ENCODE measurements at regions of chr11 and their contacts with region 1.

Region 1: GRCh38 chr11:13105237-13105844 is 96.2 kb downstream of the RASSF10 start:
- DNase-seq: peak in 4 of 5 donors; percentile 35 to 47 (median 40)
- ATAC-seq: peak in 3 of 4 donors; percentile 36 to 70 (median 69)
- H3K4me3 ChIP-seq: no peak overlapping the region
- H3K27ac ChIP-seq: peak overlapping the region in 4 of 12 donors; percentile 22 to 54 (median 42)
- H3K4me1 ChIP-seq: peaks cover 0 to 20% (median 6%) of the 10 kb centered on the region in 12 donors
- H3K27me3 ChIP-seq: peaks cover 0 to 4% (median 0%) of the 10 kb centered on the region in 9 donors
- CTCF ChIP-seq: no peak
- POLR2A ChIP-seq: no peak

Region 2: GRCh38 chr11:13008625-13009475 is 96.5 kb before region 1 on chr11 and contains the start of gene RASSF10:
- intact Hi-C with region 1: loop called in 1 of 10 experiments (anchors 10 kb)
- DNase-seq: peak; percentile 63 to 79 (median 70)
- ATAC-seq: peak; percentile 80 to 95 (median 90)
- H3K4me3 ChIP-seq: peak within 1 kb of the TSS; percentile 26 to 67 (median 54)
- H3K27ac ChIP-seq: peak within 1 kb of the TSS in 4 of 12 donors; percentile 20 to 60 (median 46)
- H3K4me1 ChIP-seq: peaks cover 0 to 42% (median 18%) of the 10 kb centered on the region in 12 donors
- H3K27me3 ChIP-seq: peaks cover 17 to 94% (median 60%) of the 10 kb centered on the region in 9 donors
- CTCF ChIP-seq: no peak
- POLR2A ChIP-seq: peak in 1 of 2 donors; percentile 84
- total RNA-seq, gene RASSF10: 0.07 to 0.85 (median 0.36) TPM

Region 3: GRCh38 chr11:13030857-13031256 is 74.5 kb before region 1 on chr11:
- intact Hi-C with region 1: loop called in 2 of 10 experiments (anchors 5 kb)
- DNase-seq: peak; percentile 56 to 75 (median 60)
- ATAC-seq: peak; percentile 47 to 79 (median 71)
- H3K4me3 ChIP-seq: no peak overlapping the region
- H3K27ac ChIP-seq: peak overlapping the region in 3 of 12 donors; percentile 11 to 55 (median 38)
- H3K4me1 ChIP-seq: peaks cover 0 to 34% (median 8%) of the 10 kb centered on the region in 12 donors
- H3K27me3 ChIP-seq: peaks cover 0 to 11% (median 0%) of the 10 kb centered on the region in 9 donors
- CTCF ChIP-seq: no peak
- POLR2A ChIP-seq: no peak

Region 4: DNA sequence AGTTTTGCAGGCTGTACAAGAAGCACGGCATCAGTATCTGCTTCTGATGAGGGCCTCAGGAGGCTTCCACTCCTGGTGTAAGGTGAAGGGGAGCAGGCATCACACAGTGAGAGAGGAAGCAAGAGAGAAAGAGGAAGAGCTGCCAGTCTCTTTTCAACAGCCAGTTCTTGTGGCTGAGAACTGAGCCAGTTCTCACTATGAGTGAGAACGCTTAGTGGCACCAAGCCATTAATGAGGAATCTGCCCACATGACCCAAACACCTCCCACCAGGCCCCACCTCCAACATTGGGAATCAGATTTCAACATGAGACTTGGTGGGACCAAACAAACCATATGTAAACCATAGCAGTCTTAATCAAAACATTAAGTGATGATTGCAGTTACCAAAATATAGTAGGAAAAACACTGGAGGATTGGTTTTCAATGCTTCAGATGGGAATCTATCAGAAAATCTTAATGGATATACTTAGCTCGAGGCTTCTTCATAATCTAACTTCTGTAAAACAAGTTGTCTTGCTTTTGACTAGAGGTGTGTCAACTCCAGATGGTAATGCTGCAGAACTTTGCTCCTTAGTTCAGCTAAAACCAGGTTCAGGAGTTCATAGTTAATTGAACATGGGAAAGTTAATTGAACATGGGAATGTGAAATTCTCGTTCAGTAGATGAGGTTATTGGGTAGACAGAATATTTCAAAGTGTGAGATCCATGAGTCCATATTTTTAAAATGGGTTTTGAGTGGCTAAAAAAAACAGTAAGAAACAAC is 575.3 kb after region 1 on chr11:
- intact Hi-C with region 1: no loop called
- DNase-seq: peak in 3 of 5 donors; percentile 17 to 30 (median 25)
- ATAC-seq: peak in 3 of 4 donors; percentile 66 to 73 (median 68)
- H3K4me3 ChIP-seq: no peak overlapping the region
- H3K27ac ChIP-seq: peak overlapping the region in 1 of 12 donors; percentile 22
- H3K4me1 ChIP-seq: peaks cover 0 to 90% (median 32%) of the 10 kb centered on the region in 12 donors
- H3K27me3 ChIP-seq: no peaks in the 10 kb centered on the region
- CTCF ChIP-seq: no peak
- POLR2A ChIP-seq: no peak